A673 (cell line): ENCODE measurements at regions of chr16 and their contacts with region 1.

Region 1: GRCh38 chr16:74942977-74943918 is 41.7 kb downstream of the WDR59 start:
- DNase-seq: no peak
- H3K4me3 ChIP-seq: no peak overlapping the region
- H3K27ac ChIP-seq: no peak overlapping the region
- H3K4me1 ChIP-seq: no peaks in the 10 kb centered on the region
- H3K27me3 ChIP-seq: no peaks in the 10 kb centered on the region
- CTCF ChIP-seq: no peak

Region 2: GRCh38 chr16:74724820-74725549 is 218.3 kb before region 1 on chr16:
- CTCF ChIA-PET with region 1: interaction called, 13 read pairs
- POLR2A ChIA-PET with region 1: no interaction called
- intact Hi-C with region 1: no loop called
- DNase-seq: no peak
- H3K4me3 ChIP-seq: no peak overlapping the region
- H3K27ac ChIP-seq: no peak overlapping the region
- H3K4me1 ChIP-seq: no peaks in the 10 kb centered on the region
- H3K27me3 ChIP-seq: no peaks in the 10 kb centered on the region
- CTCF ChIP-seq: no peak

Region 3: GRCh38 chr16:74793571-74793970 is 149.7 kb before region 1 on chr16:
- CTCF ChIA-PET with region 1: no interaction called
- POLR2A ChIA-PET with region 1: no interaction called
- intact Hi-C with region 1: no loop called
- DNase-seq: no peak
- H3K4me3 ChIP-seq: no peak overlapping the region
- H3K27ac ChIP-seq: no peak overlapping the region
- H3K4me1 ChIP-seq: no peaks in the 10 kb centered on the region
- H3K27me3 ChIP-seq: peaks cover 4% of the 10 kb centered on the region
- CTCF ChIP-seq: no peak

Region 4: GRCh38 chr16:74877706-74878105 is 65.5 kb before region 1 on chr16:
- CTCF ChIA-PET with region 1: no interaction called
- POLR2A ChIA-PET with region 1: no interaction called
- intact Hi-C with region 1: no loop called
- DNase-seq: no peak
- H3K4me3 ChIP-seq: no peak overlapping the region
- H3K27ac ChIP-seq: no peak overlapping the region
- H3K4me1 ChIP-seq: no peaks in the 10 kb centered on the region
- H3K27me3 ChIP-seq: no peaks in the 10 kb centered on the region
- CTCF ChIP-seq: no peak